CD8-positive, alpha-beta memory T cell (primary cell): ENCODE measurements at regions of chr17 and their contacts with region 1.

Region 1: GRCh38 chr17:75405365-75406221 is at the start of gene GRB2:
- DNase-seq: peak; percentile 99 to 100 (median 100)
- H3K4me3 ChIP-seq: peak within 1 kb of the TSS; percentile 68
- H3K4me3 Mint-ChIP-seq: peak within 1 kb of the TSS; percentile 93 to 98 (median 97)
- H3K27ac ChIP-seq: peak within 1 kb of the TSS; percentile 90
- H3K27ac Mint-ChIP-seq: peak within 1 kb of the TSS; percentile 86 to 99 (median 95)
- H3K4me1 ChIP-seq: peaks cover 40% of the 10 kb centered on the region
- H3K4me1 Mint-ChIP-seq: peaks cover 37 to 47% (median 45%) of the 10 kb centered on the region in 3 donors
- H3K27me3 ChIP-seq: no peaks in the 10 kb centered on the region
- H3K27me3 Mint-ChIP-seq: peaks cover 0 to 4% of the 10 kb centered on the region in 2 donors
- total RNA-seq, gene GRB2: 180 to 189 TPM

Region 2: DNA sequence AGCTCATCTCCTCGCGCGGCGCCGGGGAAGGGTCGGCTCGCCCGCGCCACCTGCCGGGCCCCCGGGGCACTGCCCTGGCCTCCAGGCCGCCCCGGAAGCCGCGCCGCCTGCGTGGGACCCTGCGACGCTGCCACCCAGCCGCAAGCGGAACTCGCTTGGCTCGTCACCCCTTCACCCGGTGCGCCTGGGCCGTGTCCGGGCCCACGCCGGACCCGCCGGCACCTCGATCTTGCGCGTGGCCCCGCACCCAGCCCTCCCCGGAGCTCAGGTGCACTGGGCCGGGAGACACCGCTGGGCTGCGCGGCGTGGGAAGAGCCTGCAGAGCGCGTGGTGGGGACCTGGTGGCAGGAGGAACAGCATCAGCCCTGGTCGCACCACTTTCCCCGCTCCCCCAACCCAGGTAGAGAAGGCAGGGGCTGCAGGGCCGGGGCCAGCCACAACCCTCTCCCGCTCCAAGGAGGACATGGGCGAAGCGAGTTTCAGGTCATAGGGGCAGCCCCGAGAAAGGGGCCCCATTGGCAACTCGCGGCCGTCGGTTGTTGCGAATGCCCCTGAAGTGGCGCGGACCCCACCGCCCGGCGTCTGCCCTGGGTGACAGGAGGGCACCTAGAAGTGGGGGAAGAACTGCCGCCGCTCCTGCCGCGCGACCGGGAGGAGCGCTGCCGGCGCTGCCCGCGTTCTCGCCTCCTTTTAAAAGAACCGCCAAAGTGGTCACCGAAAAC is 134.2 kb before region 1 on chr17:
- CTCF ChIA-PET with region 1: interaction called, 10 read pairs
- POLR2A ChIA-PET with region 1: interaction called, 5 read pairs
- DNase-seq: peak; percentile 83 to 92 (median 90)
- H3K4me3 ChIP-seq: peak overlapping the region; percentile 72
- H3K4me3 Mint-ChIP-seq: peak overlapping the region; percentile 77 to 92 (median 83)
- H3K27ac ChIP-seq: peak overlapping the region; percentile 89
- H3K27ac Mint-ChIP-seq: peak overlapping the region; percentile 72 to 94 (median 90)
- H3K4me1 ChIP-seq: peaks cover 19% of the 10 kb centered on the region
- H3K4me1 Mint-ChIP-seq: peaks cover 20 to 35% (median 23%) of the 10 kb centered on the region in 3 donors
- H3K27me3 ChIP-seq: no peaks in the 10 kb centered on the region
- H3K27me3 Mint-ChIP-seq: peaks cover 0 to 1% of the 10 kb centered on the region in 2 donors

Region 3: GRCh38 chr17:75393523-75394331 is 11.9 kb before region 1 on chr17:
- CTCF ChIA-PET with region 1: no interaction called
- POLR2A ChIA-PET with region 1: interaction called, 15 read pairs
- DNase-seq: peak; percentile 72 to 88 (median 78)
- H3K4me3 ChIP-seq: peak overlapping the region; percentile 86
- H3K4me3 Mint-ChIP-seq: peak overlapping the region; percentile 89 to 99 (median 95)
- H3K27ac ChIP-seq: peak overlapping the region; percentile 49
- H3K27ac Mint-ChIP-seq: peak overlapping the region; percentile 52 to 95 (median 88)
- H3K4me1 ChIP-seq: peaks cover 66% of the 10 kb centered on the region
- H3K4me1 Mint-ChIP-seq: peaks cover 73 to 96% (median 87%) of the 10 kb centered on the region in 3 donors
- H3K27me3 ChIP-seq: no peaks in the 10 kb centered on the region
- H3K27me3 Mint-ChIP-seq: no peaks in the 10 kb centered on the region